ENCODE measurements at regions of chr1 and their contacts with region 1.

Region 1: DNA sequence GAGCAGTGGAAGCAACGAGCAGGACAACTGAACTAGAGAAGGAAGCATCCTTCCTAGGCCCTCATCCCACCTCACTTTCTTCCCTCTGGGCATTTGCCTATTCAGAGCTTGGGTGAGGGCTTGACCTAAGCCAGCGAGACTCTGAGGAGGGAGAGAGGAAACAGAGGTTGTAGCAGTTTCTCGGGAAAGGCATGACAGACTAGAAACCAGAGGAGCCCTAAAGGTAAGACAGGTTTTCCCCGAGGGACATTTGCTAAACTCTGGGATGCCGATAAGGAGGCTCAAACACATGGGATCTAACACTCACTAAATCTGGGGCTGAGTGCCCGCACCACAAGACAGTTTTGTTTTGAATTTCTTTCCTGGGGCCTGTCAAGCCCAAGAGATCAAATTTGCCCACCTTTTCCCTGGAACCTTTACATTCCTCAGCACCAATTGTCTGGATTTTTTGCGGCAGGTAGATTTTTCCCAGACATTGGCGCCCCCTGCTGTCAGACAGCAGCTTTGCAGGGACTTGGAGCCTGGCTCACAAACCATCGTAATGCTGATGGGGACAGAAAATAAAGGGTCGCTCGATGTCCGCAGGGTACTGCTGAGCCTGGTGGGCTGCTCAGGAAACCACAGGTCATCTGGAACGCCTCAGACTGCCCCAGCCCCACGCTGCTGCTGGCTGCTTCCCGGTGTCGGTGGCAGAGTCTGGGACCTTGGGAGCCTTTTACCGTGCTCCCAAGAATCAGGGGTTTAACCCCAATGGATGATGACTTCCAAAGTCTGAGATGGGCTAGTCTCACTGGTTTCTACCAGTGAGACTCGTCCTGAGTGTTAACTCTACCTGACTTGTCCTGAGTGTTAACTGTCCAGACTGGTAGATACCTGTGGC is 23.4 kb upstream of the TSPAN2 start:
- DNase-seq: peak; percentile 65
- ATAC-seq: peak; percentile 35; the same call in 1 of the 2 replicates
- H3K4me3 ChIP-seq: no peak overlapping the region
- H3K27ac ChIP-seq: no peak overlapping the region
- H3K4me1 ChIP-seq: peaks cover 45% of the 10 kb centered on the region
- H3K27me3 ChIP-seq: no peaks in the 10 kb centered on the region
- CTCF ChIP-seq: peak; percentile 96

Region 2: GRCh38 chr1:115052454-115053083 is 60.2 kb before region 1 on chr1:
- CTCF ChIA-PET with region 1: interaction called, 4 read pairs
- POLR2A ChIA-PET with region 1: no interaction called
- intact Hi-C with region 1: loop called (anchors 2 kb)
- DNase-seq: peak; percentile 86
- ATAC-seq: peak; percentile 82
- H3K4me3 ChIP-seq: no peak overlapping the region
- H3K27ac ChIP-seq: no peak overlapping the region
- H3K4me1 ChIP-seq: peaks cover 5% of the 10 kb centered on the region
- H3K27me3 ChIP-seq: no peaks in the 10 kb centered on the region
- CTCF ChIP-seq: peak; percentile 91

Region 3: GRCh38 chr1:115158181-115158580 is 45.4 kb after region 1 on chr1:
- CTCF ChIA-PET with region 1: no interaction called
- POLR2A ChIA-PET with region 1: no interaction called
- intact Hi-C with region 1: no loop called
- DNase-seq: peak; percentile 39
- ATAC-seq: no peak
- H3K4me3 ChIP-seq: no peak overlapping the region
- H3K27ac ChIP-seq: no peak overlapping the region
- H3K4me1 ChIP-seq: no peaks in the 10 kb centered on the region
- H3K27me3 ChIP-seq: no peaks in the 10 kb centered on the region
- CTCF ChIP-seq: no peak